B cell (primary cell): ENCODE measurements at regions of chr17 and their contacts with region 1.

Region 1: GRCh38 chr17:10172241-10172741 is 26.1 kb downstream of the GAS7 start:
- DNase-seq: peak; percentile 56
- ATAC-seq: peak; percentile 82
- H3K4me3 ChIP-seq: peak overlapping the region in 2 of 5 experiments; percentile 30 to 44
- H3K4me3 Mint-ChIP-seq: peak overlapping the region; percentile 71
- H3K27ac ChIP-seq: peak overlapping the region; percentile 42 to 48
- H3K27ac Mint-ChIP-seq: peak overlapping the region; percentile 69
- H3K4me1 ChIP-seq: peaks cover 23 to 33% of the 10 kb centered on the region in 2 donors
- H3K4me1 Mint-ChIP-seq: peaks cover 35% of the 10 kb centered on the region
- H3K27me3 ChIP-seq: no peaks in the 10 kb centered on the region
- H3K27me3 Mint-ChIP-seq: no peaks in the 10 kb centered on the region
- CTCF ChIP-seq: no peak

Region 2: GRCh38 chr17:10186771-10187411 is 14.6 kb after region 1 on chr17:
- CTCF ChIA-PET with region 1: no interaction called
- POLR2A ChIA-PET with region 1: no interaction called
- intact Hi-C with region 1: no loop called
- DNase-seq: no peak
- ATAC-seq: no peak
- H3K4me3 ChIP-seq: no peak overlapping the region
- H3K4me3 Mint-ChIP-seq: no peak overlapping the region
- H3K27ac ChIP-seq: no peak overlapping the region
- H3K27ac Mint-ChIP-seq: no peak overlapping the region
- H3K4me1 ChIP-seq: no peaks in the 10 kb centered on the region
- H3K4me1 Mint-ChIP-seq: no peaks in the 10 kb centered on the region
- H3K27me3 ChIP-seq: no peaks in the 10 kb centered on the region
- H3K27me3 Mint-ChIP-seq: peaks cover 7% of the 10 kb centered on the region
- CTCF ChIP-seq: no peak

Region 3: GRCh38 chr17:10198509-10199253 is 26.4 kb after region 1 on chr17 and contains the start of gene GAS7:
- CTCF ChIA-PET with region 1: no interaction called
- POLR2A ChIA-PET with region 1: interaction called, 4 read pairs
- intact Hi-C with region 1: loop called (anchors 2 kb)
- DNase-seq: peak; percentile 46
- ATAC-seq: peak; percentile 72
- H3K4me3 ChIP-seq: peak within 1 kb of the TSS; percentile 31 to 61 (median 53)
- H3K4me3 Mint-ChIP-seq: peak within 1 kb of the TSS; percentile 86
- H3K27ac ChIP-seq: no peak within 1 kb of the TSS
- H3K27ac Mint-ChIP-seq: peak within 1 kb of the TSS; percentile 59
- H3K4me1 ChIP-seq: peaks cover 4 to 11% of the 10 kb centered on the region in 2 donors
- H3K4me1 Mint-ChIP-seq: peaks cover 18% of the 10 kb centered on the region
- H3K27me3 ChIP-seq: peaks cover 0 to 20% (median 8%) of the 10 kb centered on the region in 4 experiments
- H3K27me3 Mint-ChIP-seq: peaks cover 33% of the 10 kb centered on the region
- CTCF ChIP-seq: no peak
- total RNA-seq, gene GAS7: 13.6 and 15.6 TPM in 2 replicates

Region 4: DNA sequence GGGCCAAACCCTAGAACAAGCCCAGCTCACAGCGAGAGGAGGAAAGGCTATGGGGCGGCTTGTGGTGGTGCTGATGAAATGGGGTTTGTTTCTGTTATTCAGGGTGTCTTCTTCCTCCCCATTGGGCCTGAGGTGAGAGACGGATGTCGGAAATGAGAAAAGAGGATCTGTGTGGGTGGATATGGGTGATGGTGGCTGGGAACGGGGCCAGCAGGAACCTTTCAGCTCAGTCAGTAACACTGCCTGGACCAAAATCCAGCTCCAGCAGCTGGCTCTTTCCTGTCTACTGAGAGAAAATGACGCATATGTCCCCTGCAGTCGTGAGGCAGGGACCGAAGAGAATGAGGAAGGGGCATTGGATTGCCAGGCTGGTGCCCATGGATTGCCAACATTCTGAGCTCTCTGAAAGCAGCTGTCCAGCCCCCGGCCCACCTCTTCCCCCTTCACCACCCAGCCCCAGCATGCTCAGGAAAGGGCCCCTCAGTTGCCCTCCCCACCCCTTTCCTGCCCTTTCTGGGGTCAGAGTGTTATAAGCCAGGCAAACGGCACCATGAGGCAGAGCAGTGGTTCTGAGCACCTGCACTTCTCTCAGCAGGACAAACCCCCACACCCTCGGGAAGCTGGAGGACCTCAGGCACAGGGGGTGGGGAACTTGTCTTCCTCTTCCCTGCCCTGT is 480.8 kb after region 1 on chr17:
- CTCF ChIA-PET with region 1: no interaction called
- POLR2A ChIA-PET with region 1: no interaction called
- intact Hi-C with region 1: no loop called
- DNase-seq: no peak
- ATAC-seq: no peak
- H3K4me3 ChIP-seq: no peak overlapping the region
- H3K4me3 Mint-ChIP-seq: no peak overlapping the region
- H3K27ac ChIP-seq: no peak overlapping the region
- H3K27ac Mint-ChIP-seq: no peak overlapping the region
- H3K4me1 ChIP-seq: peaks cover 6% of the 10 kb centered on the region in 2 donors
- H3K4me1 Mint-ChIP-seq: peaks cover 8% of the 10 kb centered on the region
- H3K27me3 ChIP-seq: no peaks in the 10 kb centered on the region
- H3K27me3 Mint-ChIP-seq: peaks cover 3% of the 10 kb centered on the region
- CTCF ChIP-seq: no peak